ENCODE measurements at regions of chr16 and their contacts with region 1.

Region 1: DNA sequence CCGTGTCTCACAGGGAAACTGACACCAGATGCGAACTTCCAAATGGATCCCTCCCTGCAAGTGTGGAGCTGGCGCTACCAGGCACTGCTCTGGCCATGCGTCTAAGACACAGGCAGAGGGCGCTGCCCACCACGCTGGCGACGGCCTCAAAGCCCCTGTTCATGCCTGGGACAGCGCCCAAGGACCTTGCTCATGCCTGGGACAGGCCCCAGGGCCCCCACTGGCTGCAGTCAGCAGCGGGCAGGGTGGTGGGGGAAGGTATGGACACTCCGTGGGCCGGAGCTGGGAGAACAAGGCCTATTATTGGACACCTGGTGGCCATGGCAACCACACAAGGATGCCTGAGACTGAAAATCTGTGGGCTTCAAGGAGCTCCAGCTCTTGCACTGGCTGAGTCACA is 8.8 kb downstream of the ZG16B start:
- DNase-seq: peak; percentile 23
- H3K4me3 ChIP-seq: no peak overlapping the region
- CTCF ChIP-seq: peak; percentile 96

Region 2: DNA sequence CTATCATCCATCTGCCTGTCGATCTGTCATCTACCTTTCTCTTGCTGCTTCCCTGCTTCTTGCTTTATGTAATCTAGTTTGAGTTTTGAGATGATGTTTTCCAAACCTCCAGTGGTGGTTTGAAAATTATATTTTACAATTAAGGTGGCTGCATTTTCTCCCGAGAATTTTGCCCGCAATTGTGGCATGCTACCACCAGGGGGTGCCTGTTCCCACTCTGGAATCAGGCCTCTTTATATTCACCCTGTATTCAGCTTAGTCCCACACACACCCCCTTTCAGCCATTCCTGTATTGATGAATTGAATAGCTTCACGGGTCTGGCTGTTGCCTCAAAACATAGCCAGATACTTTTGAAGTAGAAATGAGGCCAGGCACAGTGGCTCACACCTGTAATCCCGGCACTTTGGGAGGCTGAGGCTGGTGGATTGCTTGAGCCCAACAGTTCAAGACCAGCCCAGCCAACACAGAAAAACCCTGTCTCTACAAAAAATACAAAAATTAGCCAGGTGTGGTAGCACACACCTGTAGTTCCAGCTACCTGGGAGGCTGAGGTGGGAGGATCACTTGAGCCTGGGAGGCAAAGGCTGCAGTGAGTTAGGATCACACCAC is 15.9 kb after region 1 on chr16:
- CTCF ChIA-PET with region 1: interaction called, 31 read pairs
- POLR2A ChIA-PET with region 1: interaction called, 4 read pairs
- DNase-seq: no peak
- H3K4me3 ChIP-seq: no peak overlapping the region
- CTCF ChIP-seq: peak; percentile 6

Region 3: GRCh38 chr16:2867987-2868789 is 29.3 kb after region 1 on chr16:
- CTCF ChIA-PET with region 1: interaction called, 134 read pairs
- POLR2A ChIA-PET with region 1: interaction called, 7 read pairs
- DNase-seq: peak; percentile 51
- H3K4me3 ChIP-seq: peak overlapping the region; percentile 70
- CTCF ChIP-seq: peak; percentile 98

Region 4: DNA sequence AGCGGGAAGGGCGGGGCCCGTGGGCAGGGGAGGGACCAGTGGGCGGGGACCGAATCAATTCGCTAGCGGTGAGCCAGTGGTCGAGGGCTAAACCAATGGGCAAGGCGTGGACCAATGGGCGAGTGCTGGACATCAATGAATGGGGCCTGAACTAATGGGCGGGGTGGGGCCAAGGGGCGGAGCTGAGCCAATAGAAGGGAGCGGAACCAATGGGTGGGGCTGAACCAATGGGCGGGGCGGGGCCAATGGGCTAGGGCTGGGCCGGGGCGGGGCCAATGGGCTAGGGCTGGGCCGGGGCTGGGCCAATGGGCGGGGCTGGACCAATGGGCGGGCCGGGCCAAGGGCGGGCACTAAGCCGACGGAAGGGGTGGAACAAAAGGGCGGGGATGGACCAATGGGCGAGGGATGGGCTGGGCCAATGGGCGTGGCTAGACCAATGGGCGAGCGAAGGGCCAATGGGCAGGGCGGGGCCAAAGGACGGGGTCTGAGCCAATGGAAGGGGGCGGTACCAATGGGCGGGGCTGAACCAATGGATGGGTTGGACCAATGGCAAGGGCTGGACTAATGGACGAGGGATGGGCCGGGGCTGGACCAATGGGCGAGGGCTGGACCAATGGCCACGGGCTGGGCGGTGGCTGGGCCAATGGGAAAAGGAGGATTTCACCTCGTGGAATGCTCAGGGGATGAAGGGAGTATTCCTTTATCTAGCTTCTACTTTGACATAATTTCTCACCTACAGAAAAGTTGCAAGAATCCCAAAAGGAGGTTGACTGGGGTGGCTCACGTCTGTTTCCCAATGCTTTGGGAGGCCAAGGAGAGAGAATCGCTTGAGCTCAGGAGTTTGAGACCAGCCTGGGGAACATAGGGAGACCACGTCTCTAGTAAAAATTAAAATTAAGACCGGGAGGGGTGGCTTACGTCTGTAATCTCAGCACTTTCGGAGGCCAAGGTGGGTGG is 66.8 kb after region 1 on chr16:
- CTCF ChIA-PET with region 1: interaction called, 27 read pairs
- POLR2A ChIA-PET with region 1: no interaction called
- DNase-seq: peak; percentile 95
- H3K4me3 ChIP-seq: peak overlapping the region; percentile 78
- CTCF ChIP-seq: no peak

Region 5: DNA sequence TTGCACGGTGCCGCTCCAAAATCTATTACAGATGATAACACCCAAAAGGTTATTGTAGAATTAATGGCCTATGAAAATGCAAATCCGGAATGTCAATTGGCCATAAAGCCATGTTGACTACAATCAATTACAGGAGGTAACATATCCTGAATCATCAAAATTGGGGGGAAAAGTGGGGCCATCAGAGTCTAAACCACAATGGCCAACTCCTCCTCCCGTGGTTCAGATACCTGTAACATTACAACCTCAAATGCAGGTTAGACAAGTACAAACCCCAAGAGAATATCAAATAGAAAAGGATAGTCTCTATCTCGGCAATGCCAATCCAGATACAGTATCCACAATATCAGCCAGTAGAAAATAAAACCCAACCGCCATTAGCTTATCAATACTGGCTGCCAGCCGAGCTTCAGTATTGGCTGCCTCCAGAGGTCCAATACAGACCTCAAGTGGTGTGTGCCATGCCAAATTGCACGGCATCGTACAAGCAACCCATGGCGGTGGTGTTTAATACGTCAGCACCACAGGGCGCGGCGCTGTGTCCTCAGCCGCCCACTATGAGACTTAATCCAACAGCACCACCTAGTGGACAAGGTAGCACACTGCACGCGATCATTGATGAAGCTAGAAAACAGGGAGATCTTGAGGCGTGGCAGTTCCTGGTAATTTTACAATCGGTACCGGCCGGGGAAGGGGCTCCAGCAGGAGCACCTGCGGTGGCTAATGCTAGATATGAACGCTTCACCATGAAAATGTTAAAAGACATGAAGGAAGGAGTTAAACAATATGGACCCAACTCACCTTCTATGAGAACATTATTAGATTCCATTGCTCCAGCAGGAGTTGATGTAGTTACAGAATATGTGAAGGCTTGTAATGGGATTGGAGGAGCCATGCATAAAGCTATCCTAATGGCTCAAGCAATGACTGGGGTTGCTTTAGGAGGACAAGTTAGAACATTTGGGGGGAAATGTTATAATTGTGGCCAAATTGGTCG is 88.0 kb after region 1 on chr16:
- CTCF ChIA-PET with region 1: interaction called, 71 read pairs
- POLR2A ChIA-PET with region 1: no interaction called
- DNase-seq: no peak
- H3K4me3 ChIP-seq: peak overlapping the region; percentile 24
- CTCF ChIP-seq: peak; percentile 87